PC-3 (cell line): ENCODE measurements at regions of chr7 and their contacts with region 1.

Region 1: DNA sequence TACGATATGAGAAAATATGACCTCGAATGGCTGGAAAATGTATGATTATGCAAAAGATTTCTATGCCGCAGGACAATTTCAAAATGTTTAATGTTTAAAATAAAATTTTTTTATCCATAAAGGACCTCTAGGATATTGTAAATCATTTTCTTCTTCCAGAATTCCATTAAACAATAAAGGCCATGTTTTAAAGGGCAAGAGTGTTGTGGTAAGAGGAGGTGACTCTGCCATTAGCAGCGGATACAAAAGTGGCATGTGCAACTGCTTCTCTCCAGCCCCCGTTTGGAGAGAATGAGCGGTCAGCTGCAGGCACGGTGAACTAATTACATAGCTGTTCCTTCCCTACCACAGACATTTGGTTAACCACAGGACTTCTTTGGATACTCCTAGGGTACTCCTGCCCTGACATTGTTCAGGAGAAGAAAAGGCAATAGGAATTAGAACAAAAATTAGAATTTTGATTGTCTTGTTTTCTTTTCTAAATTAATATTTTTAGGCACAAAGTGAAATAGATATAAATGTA is 63.8 kb downstream of the HBP1 start:
- DNase-seq: peak; percentile 50
- ATAC-seq: no peak
- H3K4me3 ChIP-seq: no peak overlapping the region
- H3K27ac ChIP-seq: 0 out of 2 replicates have a peak overlapping the region, but pooled peaks have one; percentile 70
- H3K4me1 ChIP-seq: peaks cover 78% of the 10 kb centered on the region
- H3K27me3 ChIP-seq: no peaks in the 10 kb centered on the region
- CTCF ChIP-seq: no peak

Region 2: DNA sequence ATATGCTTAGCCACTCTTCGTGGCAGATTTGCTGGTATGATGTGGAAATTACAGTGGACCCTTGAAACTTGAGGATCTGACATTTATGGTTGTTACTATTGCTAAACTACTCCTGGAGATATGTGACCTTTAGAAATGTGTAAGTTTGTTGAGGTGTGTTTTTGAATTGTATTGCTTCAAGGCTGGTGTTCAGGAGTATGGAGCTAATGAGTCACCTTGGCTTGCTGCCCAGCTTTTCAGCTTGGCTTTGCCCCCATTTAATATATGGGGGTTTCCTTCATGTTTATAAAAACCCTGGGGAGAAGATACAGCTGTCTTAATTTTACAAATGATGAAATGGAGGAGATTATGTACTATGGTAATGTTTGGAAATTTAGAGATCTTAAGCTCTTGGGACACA is 52.3 kb before region 1 on chr7:
- CTCF ChIA-PET with region 1: no interaction called
- POLR2A ChIA-PET with region 1: no interaction called
- intact Hi-C with region 1: no loop called
- DNase-seq: peak; percentile 53
- ATAC-seq: peak; percentile 74
- H3K4me3 ChIP-seq: no peak overlapping the region
- H3K27ac ChIP-seq: 0 out of 2 replicates have a peak overlapping the region, but pooled peaks have one; percentile 14
- H3K4me1 ChIP-seq: peaks cover 12% of the 10 kb centered on the region
- H3K27me3 ChIP-seq: no peaks in the 10 kb centered on the region
- CTCF ChIP-seq: no peak

Region 3: GRCh38 chr7:107208024-107208521 is 24.6 kb before region 1 on chr7:
- CTCF ChIA-PET with region 1: no interaction called
- POLR2A ChIA-PET with region 1: no interaction called
- intact Hi-C with region 1: loop called (anchors 2 kb)
- DNase-seq: no peak
- ATAC-seq: no peak
- H3K4me3 ChIP-seq: no peak overlapping the region
- H3K27ac ChIP-seq: no peak overlapping the region
- H3K4me1 ChIP-seq: 0 out of 2 replicates have a peak, but pooled peaks cover 5% of the 10 kb centered on the region
- H3K27me3 ChIP-seq: no peaks in the 10 kb centered on the region
- CTCF ChIP-seq: no peak

Region 4: DNA sequence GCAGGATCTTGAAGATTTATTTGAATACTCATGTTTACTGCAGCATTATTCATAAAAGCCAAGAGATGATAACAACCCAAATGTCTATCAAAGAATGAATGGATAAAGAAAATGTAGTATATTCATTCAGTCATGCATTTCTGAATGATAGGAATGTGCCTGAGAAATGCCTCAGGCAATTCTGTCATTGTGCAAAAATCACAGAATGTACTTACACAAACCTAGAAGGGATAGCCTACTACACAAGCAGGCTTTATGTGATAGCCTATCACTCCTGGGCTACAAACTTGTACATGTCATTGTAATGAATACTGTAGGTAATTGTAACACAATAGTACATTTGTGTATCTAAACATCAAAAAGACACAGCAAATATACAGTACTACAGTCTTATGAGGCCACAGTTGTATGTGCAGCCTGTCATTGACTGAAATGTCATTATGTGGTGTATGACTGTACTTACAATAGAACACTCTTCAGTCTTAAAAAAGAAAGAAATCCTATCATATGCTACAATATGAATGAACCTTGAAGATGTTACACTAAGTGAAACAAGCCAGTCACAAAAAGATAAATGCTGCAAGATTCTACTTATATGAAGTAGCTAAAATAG is 95.4 kb after region 1 on chr7:
- CTCF ChIA-PET with region 1: no interaction called
- POLR2A ChIA-PET with region 1: no interaction called
- intact Hi-C with region 1: loop called (anchors 5 kb)
- DNase-seq: peak; percentile 86
- ATAC-seq: peak; percentile 94
- H3K4me3 ChIP-seq: no peak overlapping the region
- H3K27ac ChIP-seq: peak overlapping the region; percentile 14
- H3K4me1 ChIP-seq: peaks cover 13% of the 10 kb centered on the region
- H3K27me3 ChIP-seq: no peaks in the 10 kb centered on the region
- CTCF ChIP-seq: no peak

Region 5: GRCh38 chr7:107372298-107372697 is 139.7 kb after region 1 on chr7:
- CTCF ChIA-PET with region 1: no interaction called
- POLR2A ChIA-PET with region 1: interaction called, 5 read pairs
- intact Hi-C with region 1: loop called (anchors 2 kb)
- DNase-seq: peak; percentile 57
- ATAC-seq: peak; percentile 96
- H3K4me3 ChIP-seq: no peak overlapping the region
- H3K27ac ChIP-seq: peak overlapping the region; percentile 24
- H3K4me1 ChIP-seq: peaks cover 17% of the 10 kb centered on the region
- H3K27me3 ChIP-seq: no peaks in the 10 kb centered on the region
- CTCF ChIP-seq: no peak